Colonic mucosa (tissue), 4 donors: ENCODE measurements at regions of chr13 and their contacts with region 1.

Region 1: GRCh38 chr13:114279758-114280355 is 1.5 kb upstream of the UPF3A start:
- DNase-seq: no peak
- H3K4me3 ChIP-seq: no peak overlapping the region
- H3K27ac ChIP-seq: no peak overlapping the region
- H3K4me1 ChIP-seq: peaks cover 6% of the 10 kb centered on the region
- H3K27me3 ChIP-seq: no peaks in the 10 kb centered on the region
- CTCF ChIP-seq: no peak

Region 2: DNA sequence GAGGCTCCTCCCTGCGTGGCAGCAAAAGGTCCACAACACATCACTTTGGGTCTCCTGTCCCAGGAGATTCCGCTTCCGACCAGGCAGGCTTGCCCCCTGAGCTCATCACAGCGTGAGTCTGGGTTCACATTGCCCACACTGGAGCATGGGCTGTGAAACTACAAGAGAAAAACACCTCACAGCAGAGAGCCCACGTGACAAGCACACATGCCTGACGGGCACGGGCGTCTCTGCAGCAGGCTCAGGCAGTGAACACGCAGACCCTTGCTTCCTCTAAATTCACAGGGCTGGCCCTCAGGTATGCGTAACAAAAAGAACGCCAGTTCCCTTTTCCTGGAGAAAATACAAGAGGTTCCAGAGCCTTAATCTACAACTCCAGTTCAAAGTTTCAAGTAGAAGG is 189.4 kb before region 1 on chr13:
- intact Hi-C with region 1: no loop called
- DNase-seq: no peak
- H3K4me3 ChIP-seq: no peak overlapping the region
- H3K27ac ChIP-seq: no peak overlapping the region
- H3K4me1 ChIP-seq: no peaks in the 10 kb centered on the region
- H3K27me3 ChIP-seq: no peaks in the 10 kb centered on the region
- CTCF ChIP-seq: no peak

Region 3: GRCh38 chr13:114200399-114200911 is 79.4 kb before region 1 on chr13:
- intact Hi-C with region 1: no loop called
- DNase-seq: no peak
- H3K4me3 ChIP-seq: no peak overlapping the region
- H3K27ac ChIP-seq: no peak overlapping the region
- H3K4me1 ChIP-seq: no peaks in the 10 kb centered on the region
- H3K27me3 ChIP-seq: no peaks in the 10 kb centered on the region
- CTCF ChIP-seq: no peak

Region 4: GRCh38 chr13:114314074-114314912 is 34.4 kb after region 1 on chr13 and contains the start of gene CHAMP1:
- intact Hi-C with region 1: loop called (anchors 1 kb)
- DNase-seq: peak; percentile 95
- H3K4me3 ChIP-seq: peak within 1 kb of the TSS; percentile 83
- H3K27ac ChIP-seq: peak within 1 kb of the TSS; percentile 95
- H3K4me1 ChIP-seq: no peaks in the 10 kb centered on the region
- H3K27me3 ChIP-seq: no peaks in the 10 kb centered on the region
- CTCF ChIP-seq: no peak
- total RNA-seq, gene CHAMP1: 13.1 to 19.2 TPM

Region 5: GRCh38 chr13:114334305-114335053 is 54.6 kb after region 1 on chr13:
- intact Hi-C with region 1: no loop called
- DNase-seq: no peak
- H3K4me3 ChIP-seq: no peak overlapping the region
- H3K27ac ChIP-seq: no peak overlapping the region
- H3K4me1 ChIP-seq: peaks cover 4% of the 10 kb centered on the region
- H3K27me3 ChIP-seq: no peaks in the 10 kb centered on the region
- CTCF ChIP-seq: no peak